ENCODE measurements at regions of chr11 and their contacts with region 1.

Region 1: DNA sequence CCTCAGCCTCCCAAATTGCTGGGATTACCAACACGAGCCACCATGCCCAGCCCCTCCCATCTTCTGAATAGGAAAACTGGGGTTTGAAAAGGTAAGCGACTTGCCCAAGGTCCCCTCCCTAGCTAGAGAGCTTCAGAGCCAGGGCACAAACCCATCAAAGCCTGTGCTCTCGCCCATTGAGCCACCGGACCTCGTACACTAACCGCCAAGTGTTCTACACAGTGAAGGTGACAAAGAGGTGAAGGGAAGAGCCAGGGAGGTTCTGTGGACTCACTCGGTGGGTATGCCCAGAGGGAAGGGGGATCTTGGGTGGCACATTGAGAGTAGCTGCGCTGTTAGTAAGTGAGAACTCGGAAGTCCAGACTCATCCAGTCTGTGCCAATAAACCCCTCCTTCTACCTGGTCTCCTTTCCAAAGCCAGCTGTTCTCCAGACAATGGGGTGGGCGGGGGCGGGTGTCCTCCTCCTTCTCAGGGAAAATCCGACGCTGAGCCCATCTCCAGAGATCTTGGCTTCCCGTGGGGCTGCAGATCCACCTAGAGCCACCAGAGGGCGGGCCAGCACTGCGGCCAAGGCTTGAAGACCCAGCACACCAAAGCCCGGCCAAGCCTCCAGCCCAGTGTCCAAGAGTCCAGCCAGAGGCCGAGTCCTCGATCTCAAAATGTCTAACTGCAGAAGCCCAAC is 3.2 kb upstream of the RTN4RL2 start:
- DNase-seq: peak; percentile 82
- H3K4me3 Mint-ChIP-seq: no peak overlapping the region
- H3K27ac Mint-ChIP-seq: no peak overlapping the region
- H3K4me1 Mint-ChIP-seq: peaks cover 32% of the 10 kb centered on the region
- H3K27me3 Mint-ChIP-seq: peaks cover 78% of the 10 kb centered on the region

Region 2: DNA sequence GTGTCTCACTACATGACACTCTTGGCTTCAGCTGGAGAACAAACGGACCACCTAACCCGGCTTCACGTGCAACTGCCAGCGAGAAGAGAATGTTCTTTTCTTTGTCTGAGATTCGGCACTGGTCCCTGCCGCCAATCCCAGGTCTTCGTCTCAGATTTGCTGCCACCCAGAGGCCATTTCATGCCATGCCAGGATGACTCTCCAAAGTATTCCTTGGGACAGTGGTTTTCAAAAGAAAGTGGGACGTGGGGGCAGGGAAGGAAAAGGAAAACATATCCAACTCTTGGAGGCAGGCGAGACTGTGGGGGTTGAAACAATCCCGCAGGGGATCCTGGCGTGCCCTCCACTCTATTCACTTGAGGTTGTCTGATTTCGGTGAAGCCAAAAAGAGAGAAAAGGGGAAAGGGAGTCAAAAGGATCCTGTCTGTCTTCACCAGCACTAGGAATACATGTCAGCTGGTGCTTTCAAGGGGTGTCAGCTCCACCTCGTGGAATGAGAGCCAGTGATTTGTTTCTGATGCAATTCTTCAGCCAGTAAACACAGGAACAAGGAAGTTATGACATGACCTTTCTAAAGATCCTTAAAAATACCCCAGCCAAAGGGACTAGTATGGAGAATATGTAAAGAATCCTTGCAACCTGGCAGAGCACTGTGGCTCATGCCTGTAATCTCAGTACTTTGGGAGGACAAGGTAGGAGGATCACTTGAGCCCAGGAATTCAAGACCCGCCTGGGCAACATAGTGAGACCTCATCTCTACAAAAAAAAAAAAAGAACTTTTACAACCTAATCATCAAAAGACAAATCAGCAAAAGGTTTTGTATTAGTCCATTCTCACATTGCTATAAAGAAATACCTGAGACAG is 179.0 kb before region 1 on chr11:
- CTCF ChIA-PET with region 1: no interaction called
- DNase-seq: peak; percentile 50
- H3K4me3 Mint-ChIP-seq: no peak overlapping the region
- H3K27ac Mint-ChIP-seq: no peak overlapping the region
- H3K4me1 Mint-ChIP-seq: no peaks in the 10 kb centered on the region
- H3K27me3 Mint-ChIP-seq: peaks cover 16% of the 10 kb centered on the region

Region 3: GRCh38 chr11:57424137-57424791 is 32.8 kb before region 1 on chr11:
- CTCF ChIA-PET with region 1: interaction called, 10 read pairs
- DNase-seq: no peak
- H3K4me3 Mint-ChIP-seq: peak overlapping the region; percentile 91
- H3K27ac Mint-ChIP-seq: peak overlapping the region; percentile 96
- H3K4me1 Mint-ChIP-seq: peaks cover 66% of the 10 kb centered on the region
- H3K27me3 Mint-ChIP-seq: peaks cover 9% of the 10 kb centered on the region

Region 4: DNA sequence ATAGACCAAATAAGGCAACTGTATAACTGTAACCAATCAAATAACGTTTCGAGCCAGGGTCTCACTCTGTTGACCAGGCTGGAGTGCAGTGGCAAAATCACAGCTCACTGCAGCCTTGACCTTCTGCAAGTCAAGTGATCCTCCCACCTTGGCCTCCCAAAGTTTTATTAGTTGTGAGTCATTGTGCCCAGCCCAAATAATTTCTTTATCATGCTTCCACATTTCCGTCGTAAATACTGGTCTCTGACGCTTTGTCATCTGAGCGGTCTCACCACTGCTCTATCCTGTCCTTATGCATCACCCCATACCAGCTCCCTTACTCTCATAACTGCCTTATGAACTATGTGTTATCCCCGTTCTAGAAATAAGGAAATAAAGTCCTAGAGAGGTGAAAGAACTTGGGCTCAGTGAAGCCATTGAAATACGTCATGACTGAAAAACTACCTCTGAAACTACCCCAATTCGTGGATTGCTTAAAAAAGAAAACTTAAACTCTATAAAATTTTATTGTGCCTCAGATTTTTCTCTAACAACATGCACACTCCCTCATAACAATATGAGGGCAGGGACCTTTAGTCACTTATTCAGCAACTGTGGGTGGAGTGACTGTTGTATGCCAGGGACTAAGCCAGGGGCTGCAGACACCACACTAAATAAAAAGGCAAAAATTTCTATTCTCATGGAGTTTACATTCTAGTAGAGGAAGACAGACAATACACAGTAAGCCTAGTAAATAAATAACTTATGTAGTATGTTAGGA is 12.6 kb before region 1 on chr11:
- CTCF ChIA-PET with region 1: interaction called, 19 read pairs
- DNase-seq: no peak
- H3K4me3 Mint-ChIP-seq: no peak overlapping the region
- H3K27ac Mint-ChIP-seq: no peak overlapping the region
- H3K4me1 Mint-ChIP-seq: no peaks in the 10 kb centered on the region
- H3K27me3 Mint-ChIP-seq: peaks cover 48% of the 10 kb centered on the region

Region 5: GRCh38 chr11:57480409-57481137 is 23.5 kb after region 1 on chr11:
- CTCF ChIA-PET with region 1: interaction called, 106 read pairs
- DNase-seq: peak; percentile 86
- H3K4me3 Mint-ChIP-seq: no peak overlapping the region
- H3K27ac Mint-ChIP-seq: no peak overlapping the region
- H3K4me1 Mint-ChIP-seq: peaks cover 30% of the 10 kb centered on the region
- H3K27me3 Mint-ChIP-seq: peaks cover 83% of the 10 kb centered on the region

Region 6: DNA sequence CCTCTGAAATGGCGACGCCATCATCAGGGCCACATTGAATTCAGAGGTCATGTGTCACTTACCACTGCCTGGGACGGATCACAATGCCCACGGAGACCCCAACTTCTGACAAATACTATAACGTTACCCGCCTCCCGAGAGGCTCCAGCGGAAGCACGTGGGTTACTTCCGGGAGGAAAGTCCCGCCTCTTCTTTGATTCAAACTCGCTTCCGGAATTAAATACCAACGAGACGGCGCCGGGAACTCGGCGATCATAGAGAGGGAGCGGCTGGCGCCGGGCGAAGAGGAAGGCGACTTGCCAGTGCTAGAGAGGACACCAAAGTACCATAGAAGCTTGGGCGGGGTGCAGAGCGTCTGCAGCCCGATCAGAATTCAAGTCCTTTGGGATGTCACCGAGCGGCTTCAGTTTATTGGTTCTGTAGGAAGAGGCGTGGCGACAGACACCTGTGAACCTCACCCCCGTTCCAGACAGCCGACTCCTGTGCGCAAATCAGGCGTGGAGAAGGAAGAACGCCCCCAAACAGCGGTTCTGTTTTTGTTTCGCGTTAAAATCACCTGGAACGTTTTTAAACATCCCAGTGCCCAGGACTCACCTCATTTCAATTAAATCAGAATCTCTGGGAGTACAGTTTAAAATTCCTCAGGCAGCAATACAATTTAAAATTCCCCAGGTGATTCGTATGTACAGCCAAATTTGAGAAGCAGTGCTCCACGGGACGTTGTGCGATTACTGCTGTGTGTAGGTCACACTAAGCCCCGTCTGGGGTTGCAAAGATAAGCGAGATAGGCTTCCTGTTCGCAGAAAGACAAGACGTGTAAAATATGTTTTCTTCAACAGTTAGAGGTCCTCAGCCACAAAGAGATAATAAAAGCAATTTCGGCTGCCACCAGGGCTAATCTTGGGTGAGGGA is 73.8 kb after region 1 on chr11 and contains the start of gene TIMM10:
- CTCF ChIA-PET with region 1: interaction called, 108 read pairs
- DNase-seq: peak; percentile 96
- H3K4me3 Mint-ChIP-seq: peak within 1 kb of the TSS; percentile 84
- H3K27ac Mint-ChIP-seq: peak within 1 kb of the TSS; percentile 93
- H3K4me1 Mint-ChIP-seq: peaks cover 44% of the 10 kb centered on the region
- H3K27me3 Mint-ChIP-seq: no peaks in the 10 kb centered on the region

Region 7: DNA sequence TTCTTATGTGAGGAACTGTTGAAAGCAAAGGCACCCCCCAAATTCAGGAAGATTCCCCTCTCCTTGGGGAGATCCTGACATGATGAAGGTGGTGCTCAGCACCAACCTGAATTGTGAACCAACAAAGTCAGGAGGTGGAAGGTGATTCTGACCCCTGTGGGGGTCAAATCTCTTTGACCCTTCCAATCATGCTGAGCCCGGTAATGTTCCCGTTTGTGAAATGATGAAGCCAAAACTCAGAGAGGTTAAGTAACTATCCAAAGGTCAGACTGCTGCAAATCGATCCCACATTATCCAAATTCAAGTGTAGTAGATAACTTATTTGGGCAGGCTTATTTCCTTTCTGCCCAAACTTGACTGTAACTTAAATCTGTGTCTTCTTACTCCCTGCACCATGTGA is 159.5 kb after region 1 on chr11:
- CTCF ChIA-PET with region 1: no interaction called
- DNase-seq: no peak
- H3K4me3 Mint-ChIP-seq: no peak overlapping the region
- H3K27ac Mint-ChIP-seq: no peak overlapping the region
- H3K4me1 Mint-ChIP-seq: no peaks in the 10 kb centered on the region
- H3K27me3 Mint-ChIP-seq: peaks cover 35% of the 10 kb centered on the region

Region 8: DNA sequence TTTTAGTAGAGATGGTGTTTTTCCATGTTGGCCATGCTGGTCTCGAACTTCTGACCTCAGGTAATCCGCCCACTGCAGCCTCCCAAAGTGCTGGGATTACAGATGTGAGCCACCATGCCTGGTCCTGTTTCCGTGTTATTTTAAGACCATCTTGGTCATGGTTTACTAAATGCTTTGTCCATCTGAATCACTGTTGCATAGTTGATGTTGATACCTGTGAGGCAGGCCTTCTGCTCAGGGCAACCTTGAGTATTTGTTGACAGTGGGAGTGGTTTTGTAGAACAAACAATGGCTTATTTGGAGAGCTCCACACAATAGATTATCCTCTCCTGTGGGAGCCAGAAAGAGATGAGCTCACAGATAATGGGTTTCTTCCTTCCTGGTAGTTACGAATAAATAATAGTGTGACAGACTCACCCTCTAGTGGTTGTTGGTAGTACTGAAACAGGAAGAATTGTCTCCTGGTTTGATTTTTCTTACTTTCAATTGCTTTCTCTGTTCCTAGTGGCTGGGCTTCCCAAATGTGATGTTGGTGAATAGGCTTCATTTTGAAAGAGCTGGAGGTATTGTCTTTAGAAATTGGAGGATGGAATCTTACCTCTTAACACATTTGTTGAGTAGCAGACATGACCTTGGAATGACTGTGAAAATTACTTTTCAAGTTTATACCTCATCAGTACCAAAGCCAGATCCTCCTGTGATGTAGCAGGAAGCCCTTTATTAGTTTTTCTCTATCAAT is 343.5 kb after region 1 on chr11:
- CTCF ChIA-PET with region 1: interaction called, 10 read pairs
- DNase-seq: no peak
- H3K4me3 Mint-ChIP-seq: no peak overlapping the region
- H3K27ac Mint-ChIP-seq: peak overlapping the region; percentile 54
- H3K4me1 Mint-ChIP-seq: peaks cover 37% of the 10 kb centered on the region
- H3K27me3 Mint-ChIP-seq: no peaks in the 10 kb centered on the region

Measured in activated naive CD4-positive, alpha-beta T cell treated with anti-CD3 and anti-CD28 coated beads, Interleukin-2, amount 10 ng/mL, durations not matched to agents 7 days and 5 days (primary cell).